ENCODE measurements at regions of chr4 and their contacts with region 1.

Region 1: DNA sequence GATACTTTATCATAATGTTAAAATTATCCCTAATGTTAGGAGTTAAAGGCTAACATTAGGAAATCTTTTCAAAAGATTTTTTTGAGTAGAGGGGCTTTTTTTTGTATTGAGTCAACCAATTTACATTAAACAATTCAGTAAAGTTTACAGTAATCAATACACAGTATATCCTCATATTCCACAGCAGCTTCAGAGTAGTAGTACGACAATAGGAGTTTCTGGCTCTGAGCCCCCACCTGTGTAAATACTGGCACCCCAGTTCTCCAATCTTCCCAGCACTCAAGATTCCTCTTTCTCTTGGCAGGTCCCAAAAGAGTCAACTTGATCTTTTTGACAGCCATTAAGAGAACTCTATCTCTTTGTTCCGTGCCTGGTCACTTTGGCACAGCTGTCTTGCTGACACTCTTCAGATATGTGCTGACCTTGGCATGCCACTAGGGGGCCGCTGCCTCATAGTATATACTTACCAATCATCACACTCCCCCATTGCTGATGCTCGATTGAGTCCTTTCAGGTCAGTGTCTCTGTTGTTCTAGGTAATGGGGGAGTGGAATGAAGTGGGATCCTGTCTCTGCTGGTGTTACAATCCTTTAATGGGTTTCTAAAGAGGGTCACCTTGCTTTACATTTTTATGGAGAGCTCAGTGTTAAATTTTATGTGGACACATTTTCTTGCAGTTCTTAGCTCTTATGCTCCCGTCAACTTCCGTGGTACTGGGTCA is 19.5 kb upstream of the CCNI start:
- DNase-seq: peak; percentile 83
- H3K4me3 Mint-ChIP-seq: no peak overlapping the region
- H3K27ac Mint-ChIP-seq: no peak overlapping the region
- H3K4me1 Mint-ChIP-seq: peaks cover 14% of the 10 kb centered on the region
- H3K27me3 Mint-ChIP-seq: no peaks in the 10 kb centered on the region

Region 2: DNA sequence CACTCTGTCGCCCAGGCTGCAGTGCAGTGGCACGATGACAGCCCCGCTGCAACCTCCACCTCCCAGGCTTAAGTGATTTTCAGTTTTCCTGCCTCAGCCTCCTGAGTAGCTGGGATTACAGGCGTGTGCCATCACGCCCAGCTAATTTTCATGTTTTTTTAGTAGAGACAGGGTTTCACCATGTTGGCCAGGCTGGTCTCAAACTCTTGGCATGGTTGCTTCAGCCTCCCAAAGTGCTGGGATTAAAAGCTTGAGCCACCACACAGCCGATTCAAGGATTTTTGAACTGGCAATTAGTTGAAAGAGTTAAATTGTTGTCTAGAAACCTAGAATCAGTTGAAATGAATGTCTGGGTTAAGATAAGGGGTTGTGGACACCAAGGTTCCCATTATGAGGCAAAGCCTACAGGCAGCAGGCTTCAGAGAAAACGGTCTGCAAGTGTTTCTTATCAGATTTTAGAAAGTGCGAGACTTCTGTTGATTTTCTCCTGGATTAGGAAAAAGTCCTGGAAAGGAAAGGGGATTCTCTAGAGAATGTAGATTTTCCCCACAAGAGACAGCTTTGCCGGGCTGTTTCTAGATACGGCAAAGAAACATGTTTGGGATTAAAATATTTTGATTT is 11.1 kb before region 1 on chr4:
- CTCF ChIA-PET with region 1: interaction called, 21 read pairs
- POLR2A ChIA-PET with region 1: no interaction called
- intact Hi-C with region 1: no loop called
- DNase-seq: no peak
- H3K4me3 Mint-ChIP-seq: no peak overlapping the region
- H3K27ac Mint-ChIP-seq: no peak overlapping the region
- H3K4me1 Mint-ChIP-seq: peaks cover 7% of the 10 kb centered on the region
- H3K27me3 Mint-ChIP-seq: no peaks in the 10 kb centered on the region

Region 3: GRCh38 chr4:77156533-77156911 is 61.3 kb after region 1 on chr4:
- CTCF ChIA-PET with region 1: interaction called, 12 read pairs
- POLR2A ChIA-PET with region 1: no interaction called
- intact Hi-C with region 1: loop called (anchors 1 kb)
- DNase-seq: peak; percentile 97
- H3K4me3 Mint-ChIP-seq: peak overlapping the region; percentile 95
- H3K27ac Mint-ChIP-seq: peak overlapping the region; percentile 94
- H3K4me1 Mint-ChIP-seq: peaks cover 27% of the 10 kb centered on the region
- H3K27me3 Mint-ChIP-seq: no peaks in the 10 kb centered on the region

Region 4: GRCh38 chr4:77209936-77210335 is 114.7 kb after region 1 on chr4:
- CTCF ChIA-PET with region 1: interaction called, 252 read pairs
- POLR2A ChIA-PET with region 1: no interaction called
- intact Hi-C with region 1: no loop called
- DNase-seq: no peak
- H3K4me3 Mint-ChIP-seq: no peak overlapping the region
- H3K27ac Mint-ChIP-seq: no peak overlapping the region
- H3K4me1 Mint-ChIP-seq: no peaks in the 10 kb centered on the region
- H3K27me3 Mint-ChIP-seq: peaks cover 1% of the 10 kb centered on the region